ENCODE measurements at regions of chr13 and their contacts with region 1.

Region 1: DNA sequence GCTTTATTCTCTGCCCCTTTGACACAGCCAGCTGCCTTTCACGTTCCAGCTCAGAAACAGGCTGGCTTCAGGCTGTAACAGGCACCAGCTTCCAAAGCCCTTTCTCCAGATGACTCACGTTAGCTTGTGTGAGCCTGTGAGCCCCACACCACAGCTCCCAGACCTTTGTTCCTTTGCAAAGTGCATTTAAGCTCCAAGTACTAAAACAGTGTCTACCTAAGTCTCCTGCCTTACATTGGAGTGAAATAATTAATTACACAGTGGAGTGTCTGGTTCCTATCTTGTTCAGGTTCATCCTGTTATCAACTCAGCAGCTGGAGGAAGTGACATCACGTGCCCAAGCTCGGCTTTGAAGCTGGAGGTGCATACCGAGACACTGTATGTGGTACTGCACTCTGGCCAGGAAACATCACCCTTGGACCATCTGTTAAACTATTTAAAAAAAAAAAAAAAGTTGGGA is 475.8 kb downstream of the FOXO1 start:
- DNase-seq: peak in 1 of 2 donors; percentile 63
- ATAC-seq: peak; percentile 57
- H3K4me3 ChIP-seq: no peak overlapping the region
- H3K27ac ChIP-seq: peak overlapping the region; percentile 70 to 80
- H3K4me1 ChIP-seq: peaks cover 0 to 6% of the 10 kb centered on the region in 2 donors
- H3K27me3 ChIP-seq: no peaks in the 10 kb centered on the region

Region 2: GRCh38 chr13:40116008-40116407 is 74.7 kb before region 1 on chr13:
- intact Hi-C with region 1: loop called in 1 of 2 experiments (anchors 5 kb)
- DNase-seq: peak in 1 of 2 donors; percentile 56
- ATAC-seq: peak; percentile 42
- H3K4me3 ChIP-seq: no peak overlapping the region
- H3K27ac ChIP-seq: peak overlapping the region in 1 of 2 donors; percentile 86
- H3K4me1 ChIP-seq: peaks cover 5 to 8% of the 10 kb centered on the region in 2 donors
- H3K27me3 ChIP-seq: no peaks in the 10 kb centered on the region

Region 3: GRCh38 chr13:40236566-40237168 is 46.0 kb after region 1 on chr13:
- intact Hi-C with region 1: loop called in 1 of 2 experiments (anchors 5 kb)
- DNase-seq: peak; percentile 63 to 78
- ATAC-seq: peak; percentile 86
- H3K4me3 ChIP-seq: no peak overlapping the region
- H3K27ac ChIP-seq: peak overlapping the region; percentile 99
- H3K4me1 ChIP-seq: peaks cover 0 to 1% of the 10 kb centered on the region in 2 donors
- H3K27me3 ChIP-seq: no peaks in the 10 kb centered on the region

Region 4: DNA sequence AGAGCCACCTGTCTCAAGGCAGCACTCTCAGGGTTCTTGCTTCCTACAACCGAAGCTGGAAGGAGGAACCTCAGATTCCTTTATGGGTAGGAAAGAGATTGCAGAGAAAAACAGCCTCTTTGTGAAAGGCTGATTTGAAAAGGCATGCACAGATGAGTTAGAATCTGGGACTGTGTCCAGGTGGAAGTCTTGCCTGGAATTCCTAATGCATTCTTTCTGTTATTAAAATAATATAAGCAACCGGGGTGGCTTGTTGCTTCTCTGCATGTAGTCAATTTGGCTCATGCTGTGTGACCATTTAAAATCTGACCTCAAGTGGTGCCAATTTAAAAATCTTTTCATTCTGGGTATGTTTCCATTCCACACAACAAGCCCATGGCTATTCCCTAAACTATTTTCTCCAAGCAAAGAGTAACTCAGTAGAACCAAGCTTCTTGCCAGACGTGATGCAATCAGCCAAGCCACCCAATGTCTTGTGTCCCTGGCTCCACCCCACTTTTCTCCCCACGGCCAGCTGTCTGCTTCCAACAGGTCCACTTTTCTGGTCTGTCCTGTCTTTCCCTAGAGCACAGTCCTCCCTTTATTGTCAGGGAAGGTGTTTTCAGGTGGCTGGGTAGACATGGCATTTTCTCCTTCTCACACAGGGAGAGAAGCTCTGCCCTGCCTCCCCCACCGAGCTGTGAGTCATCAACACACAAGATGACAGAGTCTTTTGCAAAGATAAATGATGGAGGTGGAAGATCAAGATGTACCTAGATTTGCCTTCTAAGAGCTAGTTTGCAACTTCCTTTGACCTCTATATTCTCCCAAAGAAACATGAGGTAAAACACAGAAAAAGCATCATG is 81.5 kb after region 1 on chr13:
- intact Hi-C with region 1: loop called in 1 of 2 experiments (anchors 5 kb)
- DNase-seq: peak; percentile 82 to 86
- ATAC-seq: peak; percentile 88
- H3K4me3 ChIP-seq: no peak overlapping the region
- H3K27ac ChIP-seq: peak overlapping the region; percentile 90 to 99
- H3K4me1 ChIP-seq: peaks cover 2 to 4% of the 10 kb centered on the region in 2 donors
- H3K27me3 ChIP-seq: no peaks in the 10 kb centered on the region

Region 5: DNA sequence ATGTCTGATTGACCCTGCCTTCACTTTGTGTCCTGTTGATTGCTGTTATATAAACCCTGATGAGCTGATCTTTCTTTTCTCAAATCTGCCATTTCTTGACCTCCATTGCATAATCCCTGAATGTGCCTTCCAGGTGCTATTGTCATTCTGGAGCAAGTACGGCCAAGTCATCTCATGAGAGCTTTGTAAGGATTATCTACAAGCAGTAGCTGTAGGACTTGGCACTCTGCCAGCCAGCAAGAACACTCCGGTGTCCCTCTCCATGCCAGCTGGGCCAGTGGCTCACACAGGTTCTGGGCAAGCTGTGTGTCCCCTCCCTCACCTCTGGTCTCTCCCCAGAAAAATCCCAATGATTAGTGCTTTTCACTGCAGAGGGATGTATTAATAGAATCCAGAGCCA is 127.7 kb after region 1 on chr13:
- intact Hi-C with region 1: no loop called
- DNase-seq: peak in 1 of 2 donors; percentile 53
- ATAC-seq: no peak
- H3K4me3 ChIP-seq: no peak overlapping the region
- H3K27ac ChIP-seq: no peak overlapping the region
- H3K4me1 ChIP-seq: no peaks in the 10 kb centered on the region
- H3K27me3 ChIP-seq: no peaks in the 10 kb centered on the region

Region 6: GRCh38 chr13:40470660-40471059 is 280.0 kb after region 1 on chr13:
- intact Hi-C with region 1: loop called in 1 of 2 experiments (anchors 5 kb)
- DNase-seq: no peak
- ATAC-seq: peak; percentile 92
- H3K4me3 ChIP-seq: no peak overlapping the region
- H3K27ac ChIP-seq: peak overlapping the region; percentile 70 to 92
- H3K4me1 ChIP-seq: peaks cover 0 to 3% of the 10 kb centered on the region in 2 donors
- H3K27me3 ChIP-seq: no peaks in the 10 kb centered on the region

Measured in aorta (tissue), 5 donors.